H1 (cell line): ENCODE measurements at regions of chr1 and their contacts with region 1.

Region 1: DNA sequence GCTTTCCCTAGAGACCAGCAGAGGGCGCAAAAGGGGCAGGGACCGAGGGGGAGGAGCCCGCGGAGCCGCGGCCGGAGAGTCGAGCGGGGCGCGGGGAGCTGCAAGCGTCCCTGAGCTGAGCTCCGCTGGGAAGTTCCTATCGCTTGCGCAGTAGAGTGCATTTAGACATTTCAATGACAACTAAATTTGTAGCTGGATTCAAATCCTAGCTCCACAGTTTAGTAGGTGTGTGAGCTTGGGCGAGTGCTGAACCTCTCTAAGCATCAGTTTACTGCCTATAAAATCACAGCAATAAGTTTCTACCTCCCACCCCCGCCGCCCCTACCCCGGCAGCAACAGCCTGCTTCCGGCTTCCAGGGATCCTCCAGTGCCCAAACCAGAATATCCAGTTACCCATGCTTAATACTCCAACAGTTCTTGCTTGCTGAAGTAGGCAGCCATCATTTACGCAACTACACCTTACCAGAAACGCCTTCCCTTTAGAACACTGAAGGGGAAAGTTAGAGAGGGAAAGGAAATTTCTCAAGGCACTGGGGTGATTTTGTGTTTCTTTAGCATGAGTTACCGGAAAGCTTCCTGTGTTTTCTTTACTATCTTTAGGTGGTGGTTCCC is 9.1 kb downstream of the TLR5 start:
- DNase-seq: peak; percentile 70 to 93
- H3K4me3 ChIP-seq: peak overlapping the region; percentile 34 to 63 (median 44); a peak in 7 of 8 replicates
- H3K27ac ChIP-seq: peak overlapping the region; percentile 16; the same call in 1 of the 2 replicates
- H3K4me1 ChIP-seq: peaks cover 16 to 25% (median 19%) of the 10 kb centered on the region in 4 experiments
- H3K27me3 ChIP-seq: peaks cover 0 to 7% (median 2%) of the 10 kb centered on the region in 4 experiments; a peak in 6 of 7 replicates
- CTCF ChIP-seq: peak; percentile 88 to 93 (median 88)
- EP300 ChIP-seq: peak in 1 of 2 experiments; percentile 42; a peak in 1 of 3 replicates
- POLR2A ChIP-seq: peak in 1 of 2 experiments; percentile 61; a peak in 2 of 3 replicates
- RAD21 ChIP-seq: peak; percentile 68 to 76

Region 2: GRCh38 chr1:222750651-222751050 is 383.3 kb before region 1 on chr1:
- CTCF ChIA-PET with region 1: interaction called, 10 read pairs
- POLR2A ChIA-PET with region 1: no interaction called
- DNase-seq: no peak
- H3K4me3 ChIP-seq: no peak overlapping the region
- H3K27ac ChIP-seq: no peak overlapping the region
- H3K4me1 ChIP-seq: no peaks in the 10 kb centered on the region
- H3K27me3 ChIP-seq: no peaks in the 10 kb centered on the region
- CTCF ChIP-seq: no peak
- EP300 ChIP-seq: no peak
- POLR2A ChIP-seq: no peak
- RAD21 ChIP-seq: no peak

Region 3: GRCh38 chr1:223022641-223023473 is 111.1 kb before region 1 on chr1:
- CTCF ChIA-PET with region 1: no interaction called
- POLR2A ChIA-PET with region 1: no interaction called
- DNase-seq: no peak
- H3K4me3 ChIP-seq: peak overlapping the region in 3 of 4 experiments; percentile 5 to 47 (median 12); a peak in 4 of 8 replicates
- H3K27ac ChIP-seq: peak overlapping the region; percentile 46; the same call in 1 of the 2 replicates
- H3K4me1 ChIP-seq: peaks cover 14 to 42% (median 27%) of the 10 kb centered on the region in 4 experiments
- H3K27me3 ChIP-seq: no peaks in the 10 kb centered on the region
- CTCF ChIP-seq: peak in 1 of 3 experiments; percentile 6; a peak in 1 of 4 replicates
- EP300 ChIP-seq: peak in 1 of 2 experiments; percentile 34; a peak in 1 of 3 replicates
- POLR2A ChIP-seq: peak; percentile 39 to 46; a peak in 2 of 3 replicates
- RAD21 ChIP-seq: no peak

Region 4: GRCh38 chr1:223114871-223115270 is 19.1 kb before region 1 on chr1:
- CTCF ChIA-PET with region 1: interaction called, 16 read pairs
- POLR2A ChIA-PET with region 1: no interaction called
- DNase-seq: no peak
- H3K4me3 ChIP-seq: no peak overlapping the region
- H3K27ac ChIP-seq: no peak overlapping the region
- H3K4me1 ChIP-seq: peaks cover 0 to 5% (median 2%) of the 10 kb centered on the region in 4 experiments; a peak in 2 of 7 replicates
- H3K27me3 ChIP-seq: no peaks in the 10 kb centered on the region
- CTCF ChIP-seq: no peak
- EP300 ChIP-seq: no peak
- POLR2A ChIP-seq: no peak
- RAD21 ChIP-seq: no peak

Region 5: GRCh38 chr1:223149046-223149445 is 15.1 kb after region 1 on chr1:
- CTCF ChIA-PET with region 1: interaction called, 36 read pairs
- POLR2A ChIA-PET with region 1: interaction called, 4 read pairs
- DNase-seq: no peak
- H3K4me3 ChIP-seq: no peak overlapping the region
- H3K27ac ChIP-seq: no peak overlapping the region
- H3K4me1 ChIP-seq: no peaks in the 10 kb centered on the region
- H3K27me3 ChIP-seq: peaks cover 0 to 6% (median 1%) of the 10 kb centered on the region in 4 experiments; a peak in 2 of 7 replicates
- CTCF ChIP-seq: no peak
- EP300 ChIP-seq: no peak
- POLR2A ChIP-seq: no peak
- RAD21 ChIP-seq: no peak

Region 6: GRCh38 chr1:223161321-223161720 is 27.4 kb after region 1 on chr1:
- CTCF ChIA-PET with region 1: interaction called, 24 read pairs
- POLR2A ChIA-PET with region 1: no interaction called
- DNase-seq: no peak
- H3K4me3 ChIP-seq: no peak overlapping the region
- H3K27ac ChIP-seq: no peak overlapping the region
- H3K4me1 ChIP-seq: 0 out of 7 replicates have a peak, but pooled peaks cover 0 to 2% (median 0%) of the 10 kb centered on the region in 4 experiments
- H3K27me3 ChIP-seq: no peaks in the 10 kb centered on the region
- CTCF ChIP-seq: peak; percentile 27 to 64 (median 57); a peak in 3 of 4 replicates
- EP300 ChIP-seq: no peak
- POLR2A ChIP-seq: no peak
- RAD21 ChIP-seq: peak in 1 of 2 experiments; percentile 31; a peak in 1 of 4 replicates

Region 7: GRCh38 chr1:223216531-223217205 is 82.7 kb after region 1 on chr1:
- CTCF ChIA-PET with region 1: no interaction called
- POLR2A ChIA-PET with region 1: no interaction called
- DNase-seq: no peak
- H3K4me3 ChIP-seq: no peak overlapping the region
- H3K27ac ChIP-seq: no peak overlapping the region
- H3K4me1 ChIP-seq: no peaks in the 10 kb centered on the region
- H3K27me3 ChIP-seq: no peaks in the 10 kb centered on the region
- CTCF ChIP-seq: no peak
- EP300 ChIP-seq: no peak
- POLR2A ChIP-seq: no peak
- RAD21 ChIP-seq: no peak